ENCODE measurements at regions of chr3 and their contacts with region 1.

Region 1: DNA sequence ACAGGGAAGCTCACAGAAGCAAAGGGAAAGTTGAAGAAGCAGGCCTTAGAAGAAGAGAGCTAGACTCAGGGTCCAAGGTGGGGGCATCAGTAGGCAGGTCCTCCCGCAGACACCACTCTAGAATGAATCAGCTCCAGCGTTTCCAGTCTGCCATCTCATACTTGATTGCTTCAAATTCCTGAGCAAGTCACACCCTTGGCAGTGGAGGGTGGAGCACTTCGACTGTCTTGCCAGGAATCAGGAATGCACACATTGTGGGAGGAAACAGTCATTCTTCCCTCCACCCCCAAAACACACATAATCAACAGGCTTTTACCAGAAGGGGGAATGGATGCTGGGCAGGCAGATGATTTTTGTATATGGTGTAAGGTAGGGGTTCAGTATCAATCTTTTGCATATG is 78.5 kb downstream of the CHCHD6 start:
- DNase-seq: peak; percentile 91
- ATAC-seq: peak; percentile 96
- H3K4me3 ChIP-seq: peak overlapping the region; percentile 32; the same call in 1 of the 2 replicates
- H3K27ac ChIP-seq: peak overlapping the region; percentile 91
- H3K4me1 ChIP-seq: peaks cover 30% of the 10 kb centered on the region
- H3K27me3 ChIP-seq: no peaks in the 10 kb centered on the region
- CTCF ChIP-seq: no peak

Region 2: GRCh38 chr3:126558336-126559071 is 224.1 kb before region 1 on chr3 and contains the start of gene C3orf22:
- CTCF ChIA-PET with region 1: no interaction called
- POLR2A ChIA-PET with region 1: no interaction called
- intact Hi-C with region 1: no loop called
- DNase-seq: no peak
- ATAC-seq: no peak
- H3K4me3 ChIP-seq: no peak within 1 kb of the TSS
- H3K27ac ChIP-seq: no peak within 1 kb of the TSS
- H3K4me1 ChIP-seq: no peaks in the 10 kb centered on the region
- H3K27me3 ChIP-seq: peaks cover 15% of the 10 kb centered on the region
- CTCF ChIP-seq: no peak
- total RNA-seq, gene C3orf22: not detected in 2 replicates

Region 3: GRCh38 chr3:126911162-126912026 is 128.8 kb after region 1 on chr3:
- CTCF ChIA-PET with region 1: no interaction called
- POLR2A ChIA-PET with region 1: no interaction called
- intact Hi-C with region 1: loop called (anchors 5 kb)
- DNase-seq: peak; percentile 95
- ATAC-seq: peak; percentile 94
- H3K4me3 ChIP-seq: no peak overlapping the region
- H3K27ac ChIP-seq: peak overlapping the region; percentile 100
- H3K4me1 ChIP-seq: peaks cover 39% of the 10 kb centered on the region
- H3K27me3 ChIP-seq: no peaks in the 10 kb centered on the region
- CTCF ChIP-seq: no peak

Region 4: DNA sequence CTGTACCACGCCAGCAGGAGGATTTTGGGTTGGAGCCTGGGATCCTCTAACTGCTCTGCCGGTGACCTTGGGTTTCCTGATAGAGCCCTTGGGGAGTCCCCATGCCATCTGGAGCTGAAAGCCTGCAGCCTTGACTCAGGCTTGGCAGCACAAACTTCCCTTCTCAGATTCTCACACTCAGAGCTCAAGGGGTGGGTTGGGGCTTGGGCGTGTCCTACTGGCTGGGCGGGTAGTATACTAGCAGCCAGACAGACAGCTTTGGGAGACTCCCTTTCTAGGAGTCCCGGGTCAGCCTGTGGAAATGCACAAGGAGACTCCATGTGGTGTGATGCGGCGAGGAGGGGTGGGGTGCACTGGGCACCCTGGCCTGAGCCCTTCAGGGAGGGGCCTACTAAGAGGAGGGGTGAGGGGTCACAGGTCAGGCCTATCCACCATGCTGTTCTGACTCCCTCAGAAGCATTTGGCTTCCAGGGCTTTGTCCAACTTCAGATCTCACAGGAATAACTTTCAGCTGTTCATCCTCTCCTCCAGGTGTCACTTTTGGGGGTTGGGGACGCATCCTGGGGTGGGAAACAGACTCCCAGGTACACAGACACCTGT is 178.7 kb after region 1 on chr3:
- CTCF ChIA-PET with region 1: no interaction called
- POLR2A ChIA-PET with region 1: no interaction called
- intact Hi-C with region 1: no loop called
- DNase-seq: peak; percentile 75
- ATAC-seq: peak; percentile 67
- H3K4me3 ChIP-seq: no peak overlapping the region
- H3K27ac ChIP-seq: peak overlapping the region; percentile 89
- H3K4me1 ChIP-seq: peaks cover 37% of the 10 kb centered on the region
- H3K27me3 ChIP-seq: no peaks in the 10 kb centered on the region
- CTCF ChIP-seq: no peak

Measured in PC-3 (cell line).